K562 (cell line): ENCODE measurements at regions of chr6 and their contacts with region 1.

Region 1: DNA sequence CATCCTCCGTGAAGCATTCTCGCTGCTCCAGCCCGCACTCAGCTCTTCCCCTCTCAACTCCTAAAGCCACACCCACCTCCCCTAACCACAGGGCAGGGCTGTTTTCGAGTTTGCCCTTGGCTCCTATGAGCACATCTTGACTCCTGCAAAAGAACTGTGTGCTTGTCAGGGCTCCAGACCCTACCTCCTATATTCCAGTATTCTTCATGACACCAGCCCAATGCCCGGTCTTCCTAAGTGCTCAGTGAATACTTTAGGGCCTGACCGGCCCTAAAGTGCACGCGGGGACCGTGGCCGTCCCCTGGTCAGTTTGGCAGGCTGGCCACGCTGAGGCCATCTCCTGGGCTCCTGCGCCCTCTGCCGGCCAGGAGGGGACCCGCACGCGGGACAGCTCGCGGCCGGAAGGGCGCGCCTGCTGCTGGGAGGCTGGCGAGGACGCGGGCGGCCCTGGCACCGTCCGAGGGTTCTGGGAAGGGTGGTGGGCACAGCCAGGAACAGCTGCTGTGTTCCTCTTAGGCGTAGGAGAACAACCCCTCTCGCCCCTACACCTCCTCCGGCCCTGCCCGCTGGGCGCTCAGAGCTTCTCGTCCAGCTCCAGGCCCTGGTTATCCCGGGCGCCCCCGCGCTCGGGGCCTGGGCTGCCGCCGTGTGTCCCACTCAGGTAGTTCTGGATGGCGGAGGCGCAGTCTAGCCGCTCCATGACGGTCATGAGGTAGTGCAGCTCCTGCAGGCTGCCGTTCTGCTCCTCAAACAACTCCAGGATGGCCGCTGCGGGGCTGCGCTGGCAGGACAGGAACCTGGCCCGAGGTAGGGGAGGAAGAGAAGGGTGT is 11.0 kb downstream of the UNC5CL start:
- DNase-seq: peak; percentile 85 to 95 (median 93)
- ATAC-seq: peak; percentile 98
- H3K4me3 ChIP-seq: peak overlapping the region; percentile 10
- H3K27ac ChIP-seq: no peak overlapping the region
- H3K4me1 ChIP-seq: peaks cover 0 to 13% of the 10 kb centered on the region in 2 experiments; a peak in 4 of 5 replicates
- H3K27me3 ChIP-seq: peaks cover 13 to 14% of the 10 kb centered on the region in 2 experiments; a peak in 4 of 5 replicates
- CTCF ChIP-seq: peak; percentile 98
- EP300 ChIP-seq: no peak
- POLR2A ChIP-seq: no peak
- RAD21 ChIP-seq: peak; percentile 95

Region 2: GRCh38 chr6:40328405-40328987 is 699.5 kb before region 1 on chr6:
- CTCF ChIA-PET with region 1: no interaction called
- POLR2A ChIA-PET with region 1: interaction called, 4 read pairs
- in situ Hi-C with region 1: no loop called
- intact Hi-C with region 1: loop called (anchors 5 kb)
- DNase-seq: peak; percentile 15 to 62 (median 49)
- ATAC-seq: peak; percentile 81
- H3K4me3 ChIP-seq: no peak overlapping the region
- H3K27ac ChIP-seq: no peak overlapping the region
- H3K4me1 ChIP-seq: no peaks in the 10 kb centered on the region
- H3K27me3 ChIP-seq: peaks cover 0 to 6% of the 10 kb centered on the region in 2 experiments; a peak in 1 of 5 replicates
- CTCF ChIP-seq: peak; percentile 51 to 72 (median 55)
- EP300 ChIP-seq: no peak
- POLR2A ChIP-seq: no peak
- RAD21 ChIP-seq: peak; percentile 30 to 60

Region 3: GRCh38 chr6:40545954-40546353 is 482.1 kb before region 1 on chr6:
- CTCF ChIA-PET with region 1: no interaction called
- POLR2A ChIA-PET with region 1: no interaction called
- in situ Hi-C with region 1: no loop called
- intact Hi-C with region 1: loop called (anchors 10 kb)
- DNase-seq: no peak
- ATAC-seq: no peak
- H3K4me3 ChIP-seq: no peak overlapping the region
- H3K27ac ChIP-seq: no peak overlapping the region
- H3K4me1 ChIP-seq: no peaks in the 10 kb centered on the region
- H3K27me3 ChIP-seq: peaks cover 3 to 40% of the 10 kb centered on the region in 2 experiments; a peak in 4 of 5 replicates
- CTCF ChIP-seq: no peak
- EP300 ChIP-seq: no peak
- POLR2A ChIP-seq: no peak
- RAD21 ChIP-seq: no peak

Region 4: DNA sequence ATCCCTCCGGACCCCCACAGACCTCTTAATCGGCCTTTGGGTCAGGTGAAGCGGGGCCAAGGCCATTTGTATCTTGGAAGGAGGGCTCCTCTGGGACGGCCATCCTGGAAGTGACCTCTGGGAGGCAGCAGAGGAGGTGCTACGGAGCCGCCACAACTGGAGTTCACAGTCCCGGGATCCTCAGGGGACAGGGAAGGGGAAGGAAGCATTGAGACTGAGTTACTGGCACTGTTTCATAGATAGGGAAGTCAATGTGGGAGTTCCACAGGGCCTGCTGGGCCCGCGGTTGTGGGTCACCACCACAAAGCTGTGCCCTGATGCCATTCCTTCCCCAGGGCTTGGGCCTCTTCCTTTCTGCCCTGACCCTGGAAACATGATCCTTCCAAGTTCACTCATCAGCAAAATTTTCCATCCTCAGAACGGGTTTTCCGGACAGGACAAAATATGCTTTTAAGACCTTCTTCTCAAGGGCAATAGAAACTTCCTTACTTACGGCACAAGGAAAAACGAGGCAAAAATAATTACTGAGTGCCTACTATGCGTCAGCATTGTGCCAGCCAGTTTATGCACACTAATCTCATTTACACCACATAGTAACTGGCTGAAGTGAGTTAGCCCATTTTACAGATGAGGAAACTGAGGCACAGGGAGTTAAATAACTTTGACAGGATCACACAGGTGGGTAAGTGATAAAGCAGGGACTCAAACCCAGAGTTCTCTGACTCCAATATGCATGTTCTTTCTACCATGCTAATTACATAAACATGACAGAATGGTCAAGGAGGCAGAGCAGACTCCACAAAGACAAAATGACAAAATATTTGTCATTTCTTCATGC is 132.8 kb before region 1 on chr6:
- CTCF ChIA-PET with region 1: interaction called, 10 read pairs
- POLR2A ChIA-PET with region 1: interaction called, 6 read pairs
- in situ Hi-C with region 1: no loop called
- intact Hi-C with region 1: loop called (anchors 1 kb)
- DNase-seq: peak; percentile 48 to 57 (median 56)
- ATAC-seq: peak; percentile 93
- H3K4me3 ChIP-seq: no peak overlapping the region
- H3K27ac ChIP-seq: no peak overlapping the region
- H3K4me1 ChIP-seq: no peaks in the 10 kb centered on the region
- H3K27me3 ChIP-seq: peaks cover 24 to 54% of the 10 kb centered on the region in 2 experiments
- CTCF ChIP-seq: peak; percentile 72 to 74 (median 73)
- EP300 ChIP-seq: no peak
- POLR2A ChIP-seq: no peak
- RAD21 ChIP-seq: peak; percentile 59 to 77

Region 5: DNA sequence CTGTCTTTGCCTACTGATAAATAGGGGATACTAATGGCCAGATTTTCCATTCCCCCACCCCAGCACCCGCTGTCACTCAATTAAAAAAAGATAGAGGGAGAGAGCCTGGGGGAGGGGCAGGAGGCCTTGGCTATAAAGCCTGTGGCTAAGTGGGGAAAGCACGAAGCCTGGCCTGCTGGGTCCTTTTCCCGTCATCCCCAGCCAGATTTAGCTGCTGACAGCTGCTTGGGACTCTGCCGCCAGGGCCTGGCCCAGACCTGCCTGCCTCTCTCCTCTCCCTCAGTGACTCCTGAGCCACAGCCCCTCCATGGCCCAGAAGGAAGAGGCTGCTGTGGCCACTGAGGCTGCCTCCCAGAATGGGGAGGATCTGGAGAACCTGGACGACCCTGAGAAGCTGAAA is 25.0 kb after region 1 on chr6 and contains the start of gene APOBEC2:
- CTCF ChIA-PET with region 1: no interaction called
- POLR2A ChIA-PET with region 1: no interaction called
- in situ Hi-C with region 1: no loop called
- intact Hi-C with region 1: no loop called
- DNase-seq: no peak
- ATAC-seq: no peak; the same call in 2 of the 3 replicates
- H3K4me3 ChIP-seq: no peak within 1 kb of the TSS
- H3K27ac ChIP-seq: no peak within 1 kb of the TSS
- H3K4me1 ChIP-seq: peaks cover 6 to 22% of the 10 kb centered on the region in 2 experiments
- H3K27me3 ChIP-seq: no peaks in the 10 kb centered on the region
- CTCF ChIP-seq: no peak
- EP300 ChIP-seq: no peak
- POLR2A ChIP-seq: no peak
- RAD21 ChIP-seq: no peak
- polyA plus RNA-seq, gene APOBEC2: 0.25 to 1.6 TPM

Region 6: GRCh38 chr6:41066867-41067304 is 38.9 kb after region 1 on chr6:
- CTCF ChIA-PET with region 1: no interaction called
- POLR2A ChIA-PET with region 1: no interaction called
- in situ Hi-C with region 1: no loop called
- intact Hi-C with region 1: loop called (anchors 5 kb)
- DNase-seq: peak; percentile 54 to 89 (median 56)
- ATAC-seq: peak; percentile 20; the same call in 1 of the 3 replicates
- H3K4me3 ChIP-seq: no peak overlapping the region
- H3K27ac ChIP-seq: no peak overlapping the region
- H3K4me1 ChIP-seq: peaks cover 0 to 9% of the 10 kb centered on the region in 2 experiments; a peak in 1 of 5 replicates
- H3K27me3 ChIP-seq: no peaks in the 10 kb centered on the region
- CTCF ChIP-seq: peak; percentile 72 to 89 (median 84)
- EP300 ChIP-seq: no peak
- POLR2A ChIP-seq: no peak
- RAD21 ChIP-seq: peak; percentile 76 to 79